B cell (primary cell): ENCODE measurements at regions of chr3 and their contacts with region 1.

Region 1: GRCh38 chr3:12868039-12869034 is 27.0 kb upstream of the RPL32 start:
- DNase-seq: peak; percentile 79
- ATAC-seq: peak; percentile 73
- H3K4me3 ChIP-seq: peak overlapping the region; percentile 19 to 59 (median 47)
- H3K4me3 Mint-ChIP-seq: peak overlapping the region; percentile 85
- H3K27ac ChIP-seq: no peak overlapping the region
- H3K27ac Mint-ChIP-seq: peak overlapping the region; percentile 8
- H3K4me1 ChIP-seq: peaks cover 16 to 34% of the 10 kb centered on the region in 2 donors
- H3K4me1 Mint-ChIP-seq: peaks cover 23% of the 10 kb centered on the region
- H3K27me3 ChIP-seq: peaks cover 0 to 23% (median 3%) of the 10 kb centered on the region in 4 experiments
- H3K27me3 Mint-ChIP-seq: peaks cover 9% of the 10 kb centered on the region
- CTCF ChIP-seq: peak; percentile 92

Region 2: GRCh38 chr3:12884186-12884680 is 15.9 kb after region 1 on chr3:
- CTCF ChIA-PET with region 1: interaction called, 116 read pairs
- POLR2A ChIA-PET with region 1: no interaction called
- intact Hi-C with region 1: no loop called
- DNase-seq: no peak
- ATAC-seq: no peak
- H3K4me3 ChIP-seq: no peak overlapping the region
- H3K4me3 Mint-ChIP-seq: peak overlapping the region; percentile 44
- H3K27ac ChIP-seq: no peak overlapping the region
- H3K27ac Mint-ChIP-seq: no peak overlapping the region
- H3K4me1 ChIP-seq: peaks cover 33 to 45% of the 10 kb centered on the region in 2 donors
- H3K4me1 Mint-ChIP-seq: peaks cover 42% of the 10 kb centered on the region
- H3K27me3 ChIP-seq: no peaks in the 10 kb centered on the region
- H3K27me3 Mint-ChIP-seq: peaks cover 5% of the 10 kb centered on the region
- CTCF ChIP-seq: no peak

Region 3: GRCh38 chr3:13708301-13708700 is 840.0 kb after region 1 on chr3:
- CTCF ChIA-PET with region 1: no interaction called
- POLR2A ChIA-PET with region 1: no interaction called
- intact Hi-C with region 1: no loop called
- DNase-seq: no peak
- ATAC-seq: no peak
- H3K4me3 ChIP-seq: no peak overlapping the region
- H3K4me3 Mint-ChIP-seq: no peak overlapping the region
- H3K27ac ChIP-seq: no peak overlapping the region
- H3K27ac Mint-ChIP-seq: no peak overlapping the region
- H3K4me1 ChIP-seq: no peaks in the 10 kb centered on the region
- H3K4me1 Mint-ChIP-seq: no peaks in the 10 kb centered on the region
- H3K27me3 ChIP-seq: peaks cover 0 to 17% (median 0%) of the 10 kb centered on the region in 4 experiments
- H3K27me3 Mint-ChIP-seq: peaks cover 42% of the 10 kb centered on the region
- CTCF ChIP-seq: no peak

Region 4: DNA sequence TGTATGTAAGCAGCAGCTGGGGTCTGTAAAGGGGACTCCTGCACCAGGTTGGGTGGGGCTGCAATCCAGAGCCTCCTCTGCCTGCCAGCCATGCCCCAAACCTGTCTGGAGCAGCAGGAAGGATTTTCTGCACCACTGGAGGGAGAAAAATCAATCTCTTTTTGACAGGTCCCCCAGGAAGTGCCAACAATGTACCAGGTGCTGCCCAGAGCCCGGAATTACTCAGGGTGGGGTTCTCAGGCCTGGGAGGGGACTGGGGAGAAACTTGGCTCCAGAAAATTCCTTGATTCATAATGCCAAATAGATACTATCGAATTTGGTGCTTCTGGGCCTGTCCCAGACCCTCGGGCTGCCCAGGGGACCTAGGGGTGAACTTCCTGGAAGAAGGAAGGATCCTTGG is 958.9 kb after region 1 on chr3:
- CTCF ChIA-PET with region 1: no interaction called
- POLR2A ChIA-PET with region 1: no interaction called
- intact Hi-C with region 1: no loop called
- DNase-seq: no peak
- ATAC-seq: no peak
- H3K4me3 ChIP-seq: no peak overlapping the region
- H3K4me3 Mint-ChIP-seq: no peak overlapping the region
- H3K27ac ChIP-seq: no peak overlapping the region
- H3K27ac Mint-ChIP-seq: no peak overlapping the region
- H3K4me1 ChIP-seq: no peaks in the 10 kb centered on the region
- H3K4me1 Mint-ChIP-seq: no peaks in the 10 kb centered on the region
- H3K27me3 ChIP-seq: no peaks in the 10 kb centered on the region
- H3K27me3 Mint-ChIP-seq: peaks cover 9% of the 10 kb centered on the region
- CTCF ChIP-seq: no peak